ENCODE measurements at regions of chr19 and their contacts with region 1.

Region 1: DNA sequence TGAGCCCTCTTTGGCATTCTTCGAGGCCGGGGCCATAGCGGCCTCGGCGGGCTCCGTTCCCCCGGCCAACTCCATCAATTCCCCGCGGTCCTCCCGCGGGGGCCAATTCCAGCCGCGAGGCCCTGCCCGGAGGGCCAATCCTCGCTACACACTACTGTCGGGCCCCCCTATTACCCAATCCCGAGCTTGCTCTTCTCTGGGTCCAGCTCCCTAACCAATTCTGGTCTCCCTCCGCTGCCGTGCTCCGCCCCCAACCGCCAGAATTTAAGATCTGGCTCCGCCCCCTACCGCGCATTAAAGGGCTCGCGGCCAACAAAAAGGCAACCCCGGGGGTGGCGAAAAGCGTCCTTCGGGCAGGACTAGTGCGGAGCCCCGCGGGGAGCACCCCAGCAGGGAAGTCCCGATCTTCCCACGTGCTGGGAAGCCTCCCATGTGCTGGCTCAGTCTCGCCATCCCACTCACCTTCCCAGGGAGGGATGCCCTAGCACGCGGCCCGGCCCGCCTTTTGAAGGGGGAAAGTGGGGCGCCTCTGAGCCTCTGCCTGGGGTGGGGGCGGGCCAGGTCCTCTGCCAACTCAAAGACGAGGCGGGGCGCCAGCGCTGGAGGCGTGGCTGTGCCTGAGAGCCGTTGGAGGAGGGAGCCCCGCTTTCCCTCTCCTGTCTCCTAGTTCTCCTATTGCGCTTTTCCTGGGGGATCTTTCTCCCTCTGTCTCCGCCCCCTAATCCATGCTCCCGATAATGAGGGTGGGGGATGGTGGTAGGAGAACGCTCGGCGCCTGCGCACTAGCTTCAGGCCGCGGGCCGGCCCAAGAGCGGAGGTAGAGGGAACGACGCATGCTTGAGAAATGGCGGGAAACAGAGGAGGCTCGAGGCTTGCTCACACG is 3.5 kb downstream of the LIPE start:
- DNase-seq: peak; percentile 81 to 95 (median 89)
- ATAC-seq: peak; percentile 92 to 95 (median 94)
- H3K4me3 ChIP-seq: peak overlapping the region; percentile 81 to 83
- H3K4me3 Mint-ChIP-seq: peak overlapping the region; percentile 94 to 99 (median 99)
- H3K27ac ChIP-seq: peak overlapping the region; percentile 62
- H3K27ac Mint-ChIP-seq: peak overlapping the region; percentile 85 to 95
- H3K4me1 ChIP-seq: peaks cover 8 to 50% of the 10 kb centered on the region in 2 experiments
- H3K4me1 Mint-ChIP-seq: peaks cover 42 to 47% (median 42%) of the 10 kb centered on the region in 3 donors
- H3K27me3 ChIP-seq: no peaks in the 10 kb centered on the region
- H3K27me3 Mint-ChIP-seq: no peaks in the 10 kb centered on the region

Region 2: GRCh38 chr19:42401365-42402303 is 22.1 kb before region 1 on chr19:
- CTCF ChIA-PET with region 1: interaction called in 1 of 2 experiments, 11 read pairs
- POLR2A ChIA-PET with region 1: no interaction called
- DNase-seq: peak; percentile 36 to 86 (median 69)
- ATAC-seq: peak; percentile 73 to 77 (median 75)
- H3K4me3 ChIP-seq: peak overlapping the region; percentile 56 to 58
- H3K4me3 Mint-ChIP-seq: peak overlapping the region; percentile 75 to 83 (median 81)
- H3K27ac ChIP-seq: peak overlapping the region; percentile 47
- H3K27ac Mint-ChIP-seq: peak overlapping the region; percentile 49 to 89
- H3K4me1 ChIP-seq: peaks cover 0 to 35% of the 10 kb centered on the region in 2 experiments
- H3K4me1 Mint-ChIP-seq: peaks cover 39 to 46% (median 44%) of the 10 kb centered on the region in 3 donors
- H3K27me3 ChIP-seq: peaks cover 0 to 6% of the 10 kb centered on the region in 2 experiments
- H3K27me3 Mint-ChIP-seq: no peaks in the 10 kb centered on the region

Region 3: DNA sequence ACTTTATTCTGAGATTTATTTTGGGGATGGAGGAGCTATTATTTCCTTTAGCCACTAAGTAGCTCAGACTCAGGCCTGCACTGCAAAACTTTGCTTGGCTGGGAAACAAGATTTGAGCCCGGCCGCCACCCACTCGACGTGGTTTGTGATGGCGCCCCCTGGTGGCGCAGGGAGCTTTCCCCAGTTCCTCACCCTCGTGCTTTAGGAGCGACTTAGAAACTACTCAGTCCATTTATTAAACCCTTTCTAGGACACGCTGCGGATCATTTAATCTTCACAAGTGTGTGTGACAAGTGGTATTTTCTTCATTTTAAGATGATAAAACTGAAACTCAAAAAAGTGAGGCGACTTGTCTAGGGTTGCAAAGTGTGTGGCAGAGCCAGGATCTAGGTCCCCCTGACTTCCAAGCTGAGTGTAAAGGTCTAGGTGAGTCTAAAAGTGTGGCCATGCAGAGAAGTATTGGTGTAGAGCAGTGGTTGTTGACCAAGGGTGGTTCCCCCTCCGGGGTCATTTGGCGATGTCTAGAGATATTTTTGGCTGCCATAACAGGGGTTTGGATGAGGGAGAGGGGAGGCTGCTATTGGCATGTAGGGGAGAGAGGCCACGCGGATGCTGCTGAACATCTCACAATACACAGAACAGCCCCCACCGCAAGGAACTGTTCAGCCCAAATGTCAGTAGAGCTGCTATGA is 16.8 kb after region 1 on chr19:
- CTCF ChIA-PET with region 1: interaction called, 5 to 25 read pairs
- POLR2A ChIA-PET with region 1: no interaction called
- DNase-seq: peak; percentile 36 to 89 (median 75)
- ATAC-seq: peak; percentile 57 to 71 (median 65)
- H3K4me3 ChIP-seq: no peak overlapping the region
- H3K4me3 Mint-ChIP-seq: peak overlapping the region in 2 of 3 donors; percentile 35 to 36
- H3K27ac ChIP-seq: no peak overlapping the region
- H3K27ac Mint-ChIP-seq: peak overlapping the region; percentile 63 to 66
- H3K4me1 ChIP-seq: peaks cover 20 to 27% of the 10 kb centered on the region in 2 experiments
- H3K4me1 Mint-ChIP-seq: peaks cover 30 to 46% (median 33%) of the 10 kb centered on the region in 3 donors
- H3K27me3 ChIP-seq: no peaks in the 10 kb centered on the region
- H3K27me3 Mint-ChIP-seq: no peaks in the 10 kb centered on the region

Region 4: DNA sequence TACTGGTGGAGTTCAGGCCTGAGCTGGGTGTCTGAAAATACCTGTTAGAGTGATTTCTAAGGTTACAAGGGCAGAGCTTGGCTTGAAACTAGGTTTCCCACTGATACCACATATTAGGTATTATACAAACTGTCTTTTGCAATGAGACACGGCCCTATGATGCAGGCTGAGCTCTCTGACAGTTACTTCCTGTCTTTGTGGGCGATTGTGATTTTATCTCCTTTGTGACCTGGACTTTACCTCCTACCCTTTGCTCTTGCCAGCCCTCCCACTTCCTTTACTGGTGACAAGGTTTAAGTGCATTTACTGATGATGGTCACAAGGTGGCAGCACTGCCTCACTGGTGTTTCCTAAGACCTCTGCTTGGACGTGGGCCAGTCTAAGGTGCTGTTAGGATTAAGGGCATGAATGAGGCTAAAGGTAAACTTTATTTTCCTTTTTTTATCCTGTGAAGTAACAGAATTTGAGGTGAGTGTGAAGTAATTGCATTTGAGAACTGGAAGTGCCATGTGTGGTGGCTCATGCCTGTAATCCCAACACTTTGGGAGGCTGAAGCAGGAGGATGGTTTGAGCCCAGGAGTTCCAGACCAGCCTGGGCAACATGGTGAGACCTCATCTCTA is 26.7 kb after region 1 on chr19:
- CTCF ChIA-PET with region 1: interaction called in 1 of 2 experiments, 10 read pairs
- POLR2A ChIA-PET with region 1: interaction called in 1 of 2 experiments, 3 read pairs
- DNase-seq: peak; percentile 47 to 97 (median 73)
- ATAC-seq: peak; percentile 94 to 99 (median 98)
- H3K4me3 ChIP-seq: peak overlapping the region in 1 of 2 donors; percentile 38
- H3K4me3 Mint-ChIP-seq: no peak overlapping the region
- H3K27ac ChIP-seq: peak overlapping the region; percentile 88
- H3K27ac Mint-ChIP-seq: no peak overlapping the region
- H3K4me1 ChIP-seq: peaks cover 8 to 18% of the 10 kb centered on the region in 2 experiments
- H3K4me1 Mint-ChIP-seq: peaks cover 6 to 17% (median 8%) of the 10 kb centered on the region in 3 donors
- H3K27me3 ChIP-seq: no peaks in the 10 kb centered on the region
- H3K27me3 Mint-ChIP-seq: peaks cover 2 to 4% of the 10 kb centered on the region in 2 donors

Region 5: DNA sequence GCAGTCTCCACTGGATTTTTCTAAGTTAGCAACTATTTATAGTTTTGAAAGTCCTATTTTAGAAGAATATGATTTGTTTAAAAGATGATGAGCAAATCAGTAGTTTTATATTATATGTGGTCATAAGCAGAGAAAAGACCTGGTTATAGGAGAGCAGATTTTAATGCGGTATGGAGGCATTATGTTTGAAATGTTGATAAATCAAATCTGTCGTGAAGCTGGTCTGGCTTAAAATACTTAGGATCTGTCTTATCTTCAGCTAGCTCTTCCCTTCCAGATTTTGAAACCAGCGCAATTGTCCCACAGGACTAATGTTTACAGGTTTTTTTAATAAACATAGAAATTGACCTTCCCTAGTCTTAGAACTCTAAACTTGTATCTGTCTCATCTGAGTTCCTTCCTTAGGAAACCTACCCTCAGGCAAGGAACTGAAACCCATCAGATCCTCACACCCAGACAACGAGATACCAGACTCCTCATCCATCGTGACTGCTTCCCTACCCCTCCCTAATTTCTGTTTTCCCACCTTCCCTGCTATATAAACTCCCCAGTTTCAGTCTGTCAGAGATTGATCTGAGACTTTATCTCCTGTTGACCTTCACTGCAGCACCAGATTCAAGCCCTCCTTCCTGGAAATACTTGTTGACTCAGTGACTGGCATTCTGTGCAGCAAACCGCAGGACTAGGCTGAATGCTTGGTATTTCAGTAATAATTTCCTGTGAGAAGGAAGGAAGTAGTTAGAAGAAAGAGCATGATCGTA is 56.8 kb after region 1 on chr19:
- CTCF ChIA-PET with region 1: no interaction called
- POLR2A ChIA-PET with region 1: no interaction called
- DNase-seq: peak in 9 of 35 experiments; percentile 1 to 22 (median 8)
- ATAC-seq: peak; percentile 47 to 76 (median 58)
- H3K4me3 ChIP-seq: no peak overlapping the region
- H3K4me3 Mint-ChIP-seq: peak overlapping the region; percentile 28 to 37 (median 37)
- H3K27ac ChIP-seq: peak overlapping the region; percentile 13
- H3K27ac Mint-ChIP-seq: peak overlapping the region; percentile 87 to 88
- H3K4me1 ChIP-seq: peaks cover 0 to 8% of the 10 kb centered on the region in 2 experiments
- H3K4me1 Mint-ChIP-seq: peaks cover 16 to 28% (median 25%) of the 10 kb centered on the region in 3 donors
- H3K27me3 ChIP-seq: no peaks in the 10 kb centered on the region
- H3K27me3 Mint-ChIP-seq: no peaks in the 10 kb centered on the region